BJ (cell line): ENCODE measurements at regions of chr5 and their contacts with region 1.

Region 1: DNA sequence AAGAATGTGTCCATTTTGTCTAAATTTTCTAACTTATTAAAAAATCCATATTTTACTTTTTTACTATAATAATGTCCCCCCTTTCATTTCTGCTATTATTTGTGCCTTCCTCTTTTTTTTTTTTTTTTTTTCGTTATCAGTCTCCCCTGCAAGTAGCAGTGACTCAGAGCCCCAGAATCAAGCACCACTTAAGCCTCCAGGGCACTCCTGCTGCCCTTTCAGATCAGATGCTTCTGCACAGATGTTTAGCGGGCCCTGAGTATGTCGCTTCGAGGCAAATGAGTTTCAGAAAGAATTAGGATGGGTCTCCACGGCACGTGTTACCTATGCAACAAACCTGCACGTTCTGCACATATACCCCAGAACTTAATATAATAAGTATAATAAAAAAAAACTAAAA is 11.7 kb downstream of the MED7 start:
- DNase-seq: no peak
- H3K4me3 ChIP-seq: no peak overlapping the region
- H3K27me3 ChIP-seq: no peaks in the 10 kb centered on the region
- CTCF ChIP-seq: no peak

Region 2: GRCh38 chr5:156850206-156850751 is 280.6 kb before region 1 on chr5 and contains the start of gene PPP1R2B:
- CTCF ChIA-PET with region 1: no interaction called
- POLR2A ChIA-PET with region 1: interaction called, 13 read pairs
- DNase-seq: no peak
- H3K4me3 ChIP-seq: no peak within 1 kb of the TSS
- H3K27me3 ChIP-seq: no peaks in the 10 kb centered on the region
- CTCF ChIP-seq: no peak
- polyA plus RNA-seq, gene PPP1R2B: 0.06 and 0.13 TPM in 2 replicates

Region 3: DNA sequence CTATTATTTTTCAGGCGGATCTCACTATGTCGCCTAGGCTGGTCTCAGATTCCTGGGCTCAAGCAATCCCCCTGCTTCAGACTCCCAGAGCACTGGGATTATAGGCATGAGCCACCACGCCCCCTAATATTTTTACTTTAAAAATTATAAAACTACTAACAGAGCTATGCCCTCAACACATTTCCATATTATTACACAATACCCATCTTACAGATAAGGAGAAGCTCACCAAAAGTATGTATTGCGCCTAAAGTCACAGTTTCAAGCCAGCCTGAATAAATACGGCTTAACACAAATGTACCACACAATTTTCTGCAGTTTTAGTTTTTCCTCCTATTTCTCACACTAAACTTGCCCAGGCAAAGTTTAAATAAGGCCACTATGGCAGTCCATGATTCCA is 62.1 kb before region 1 on chr5:
- CTCF ChIA-PET with region 1: no interaction called
- POLR2A ChIA-PET with region 1: no interaction called
- DNase-seq: no peak
- H3K4me3 ChIP-seq: no peak overlapping the region
- H3K27me3 ChIP-seq: no peaks in the 10 kb centered on the region
- CTCF ChIP-seq: no peak

Region 4: GRCh38 chr5:157142317-157143126 is 11.6 kb after region 1 on chr5 and contains the start of gene MED7:
- CTCF ChIA-PET with region 1: interaction called, 13 read pairs
- POLR2A ChIA-PET with region 1: no interaction called
- DNase-seq: peak; percentile 96
- H3K4me3 ChIP-seq: peak within 1 kb of the TSS; percentile 99
- H3K27me3 ChIP-seq: no peaks in the 10 kb centered on the region
- CTCF ChIP-seq: no peak
- polyA plus RNA-seq, gene MED7: 5.7 and 13.5 TPM in 2 replicates

Region 5: GRCh38 chr5:157366741-157367674 is 236.1 kb after region 1 on chr5:
- CTCF ChIA-PET with region 1: no interaction called
- POLR2A ChIA-PET with region 1: no interaction called
- DNase-seq: peak; percentile 12
- H3K4me3 ChIP-seq: no peak overlapping the region
- H3K27me3 ChIP-seq: no peaks in the 10 kb centered on the region
- CTCF ChIP-seq: peak; percentile 68